Mammary epithelial cell (primary cell): ENCODE measurements at regions of chr7 and their contacts with region 1.

Region 1: GRCh38 chr7:100428967-100429636 is 529 bp upstream of the MEPCE start:
- DNase-seq: peak; percentile 99
- H3K4me3 ChIP-seq: peak overlapping the region; percentile 83 to 91 (median 84)
- H3K27ac ChIP-seq: peak overlapping the region; percentile 95
- H3K4me1 ChIP-seq: peaks cover 20% of the 10 kb centered on the region
- H3K27me3 ChIP-seq: no peaks in the 10 kb centered on the region
- CTCF ChIP-seq: no peak

Region 2: GRCh38 chr7:100469227-100470044 is 40.3 kb after region 1 on chr7:
- CTCF ChIA-PET with region 1: no interaction called
- dilution Hi-C with region 1: no loop called
- in situ Hi-C with region 1: no loop called
- intact Hi-C with region 1: no loop called
- DNase-seq: peak; percentile 37
- H3K4me3 ChIP-seq: no peak overlapping the region
- H3K27ac ChIP-seq: no peak overlapping the region
- H3K4me1 ChIP-seq: peaks cover 10% of the 10 kb centered on the region
- H3K27me3 ChIP-seq: no peaks in the 10 kb centered on the region
- CTCF ChIP-seq: peak; percentile 91 to 92

Region 3: GRCh38 chr7:100586266-100587025 is 157.3 kb after region 1 on chr7 and contains the start of gene FBXO24:
- CTCF ChIA-PET with region 1: no interaction called
- dilution Hi-C with region 1: no loop called
- in situ Hi-C with region 1: no loop called
- intact Hi-C with region 1: loop called (anchors 1 kb)
- DNase-seq: peak; percentile 100
- H3K4me3 ChIP-seq: peak within 1 kb of the TSS; percentile 80 to 98 (median 88)
- H3K27ac ChIP-seq: peak within 1 kb of the TSS; percentile 74
- H3K4me1 ChIP-seq: peaks cover 20% of the 10 kb centered on the region
- H3K27me3 ChIP-seq: no peaks in the 10 kb centered on the region
- CTCF ChIP-seq: no peak
- total RNA-seq, gene FBXO24: 0.17 to 0.45 TPM

Region 4: GRCh38 chr7:100705753-100706671 is 276.9 kb after region 1 on chr7 and contains the start of gene POP7:
- CTCF ChIA-PET with region 1: no interaction called
- dilution Hi-C with region 1: no loop called
- in situ Hi-C with region 1: no loop called
- intact Hi-C with region 1: no loop called
- DNase-seq: peak; percentile 97
- H3K4me3 ChIP-seq: peak within 1 kb of the TSS; percentile 84 to 98 (median 90)
- H3K27ac ChIP-seq: peak within 1 kb of the TSS; percentile 72
- H3K4me1 ChIP-seq: peaks cover 12% of the 10 kb centered on the region
- H3K27me3 ChIP-seq: no peaks in the 10 kb centered on the region
- CTCF ChIP-seq: no peak
- total RNA-seq, gene POP7: 29.2 to 52.2 TPM